Heart left ventricle (tissue), 16 donors: ENCODE measurements at regions of chr17 and their contacts with region 1.

Region 1: DNA sequence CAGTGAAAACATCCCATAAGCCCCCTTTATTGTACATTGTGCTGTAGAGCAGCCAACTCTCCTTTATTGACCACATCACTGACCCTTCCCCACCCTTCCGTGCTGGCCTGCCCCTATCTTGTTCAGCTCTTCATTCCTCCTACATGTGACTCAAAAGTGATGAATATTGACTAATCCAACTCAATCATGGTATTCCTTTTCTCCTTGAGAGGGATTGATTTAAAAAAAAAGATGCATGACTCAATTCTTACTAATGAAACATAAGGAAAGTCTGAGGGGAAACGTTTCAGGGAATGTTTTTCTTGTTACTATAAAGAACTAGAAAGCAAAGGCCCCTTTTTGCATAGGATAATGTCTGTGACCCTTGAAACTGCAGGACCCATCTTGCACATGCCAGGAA is 125.2 kb upstream of the SOX9 start:
- DNase-seq: no peak
- ATAC-seq: no peak
- H3K4me3 ChIP-seq: no peak overlapping the region
- H3K27ac ChIP-seq: no peak overlapping the region
- H3K4me1 ChIP-seq: no peaks in the 10 kb centered on the region
- H3K27me3 ChIP-seq: peaks cover 0 to 5% (median 0%) of the 10 kb centered on the region in 9 donors
- CTCF ChIP-seq: no peak
- POLR2A ChIP-seq: no peak

Region 2: GRCh38 chr17:71505200-71505599 is 490.4 kb before region 1 on chr17:
- intact Hi-C with region 1: no loop called
- DNase-seq: no peak
- ATAC-seq: no peak
- H3K4me3 ChIP-seq: no peak overlapping the region
- H3K27ac ChIP-seq: no peak overlapping the region
- H3K4me1 ChIP-seq: no peaks in the 10 kb centered on the region
- H3K27me3 ChIP-seq: peaks cover 0 to 4% (median 0%) of the 10 kb centered on the region in 9 donors
- CTCF ChIP-seq: no peak
- POLR2A ChIP-seq: no peak

Region 3: DNA sequence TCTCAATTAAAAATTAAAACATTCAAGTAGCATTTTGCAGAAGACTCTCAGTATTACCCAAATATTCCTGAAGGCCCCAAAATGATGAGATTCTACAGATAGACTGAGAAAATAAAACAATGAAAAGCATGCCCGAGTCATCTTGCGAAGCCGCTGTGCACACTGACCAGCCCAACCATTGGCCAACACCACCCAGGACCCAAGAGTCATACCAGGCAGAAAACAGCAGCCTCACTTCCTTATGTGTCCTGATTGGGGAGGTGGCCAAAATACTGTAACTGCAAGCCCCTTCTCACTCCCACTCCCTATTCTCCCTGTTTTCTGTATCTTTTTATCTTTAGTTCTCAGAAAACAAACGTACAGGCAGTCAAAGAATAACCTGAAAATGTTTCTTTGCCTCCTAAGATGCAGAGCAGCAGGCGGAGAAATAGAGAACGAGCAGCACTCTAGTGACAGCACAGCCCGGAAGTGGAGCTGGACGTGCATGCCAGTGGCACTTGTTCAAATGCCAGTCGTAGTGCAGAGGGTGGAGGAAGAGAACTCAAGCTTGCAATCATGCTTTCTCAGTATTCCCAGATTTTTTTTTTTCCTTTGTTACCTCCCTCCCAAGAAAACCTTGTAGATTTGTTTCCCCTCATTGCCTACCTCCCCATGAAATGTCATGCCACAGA is 57.1 kb before region 1 on chr17:
- intact Hi-C with region 1: loop called in 1 of 10 experiments (anchors 10 kb)
- DNase-seq: peak in 3 of 5 donors; percentile 13 to 48 (median 34)
- ATAC-seq: peak in 3 of 4 donors; percentile 71 to 81 (median 75)
- H3K4me3 ChIP-seq: no peak overlapping the region
- H3K27ac ChIP-seq: no peak overlapping the region
- H3K4me1 ChIP-seq: no peaks in the 10 kb centered on the region
- H3K27me3 ChIP-seq: no peaks in the 10 kb centered on the region
- CTCF ChIP-seq: no peak
- POLR2A ChIP-seq: no peak